Body of pancreas (tissue), 4 donors: ENCODE measurements at regions of chr2 and their contacts with region 1.

Region 1: DNA sequence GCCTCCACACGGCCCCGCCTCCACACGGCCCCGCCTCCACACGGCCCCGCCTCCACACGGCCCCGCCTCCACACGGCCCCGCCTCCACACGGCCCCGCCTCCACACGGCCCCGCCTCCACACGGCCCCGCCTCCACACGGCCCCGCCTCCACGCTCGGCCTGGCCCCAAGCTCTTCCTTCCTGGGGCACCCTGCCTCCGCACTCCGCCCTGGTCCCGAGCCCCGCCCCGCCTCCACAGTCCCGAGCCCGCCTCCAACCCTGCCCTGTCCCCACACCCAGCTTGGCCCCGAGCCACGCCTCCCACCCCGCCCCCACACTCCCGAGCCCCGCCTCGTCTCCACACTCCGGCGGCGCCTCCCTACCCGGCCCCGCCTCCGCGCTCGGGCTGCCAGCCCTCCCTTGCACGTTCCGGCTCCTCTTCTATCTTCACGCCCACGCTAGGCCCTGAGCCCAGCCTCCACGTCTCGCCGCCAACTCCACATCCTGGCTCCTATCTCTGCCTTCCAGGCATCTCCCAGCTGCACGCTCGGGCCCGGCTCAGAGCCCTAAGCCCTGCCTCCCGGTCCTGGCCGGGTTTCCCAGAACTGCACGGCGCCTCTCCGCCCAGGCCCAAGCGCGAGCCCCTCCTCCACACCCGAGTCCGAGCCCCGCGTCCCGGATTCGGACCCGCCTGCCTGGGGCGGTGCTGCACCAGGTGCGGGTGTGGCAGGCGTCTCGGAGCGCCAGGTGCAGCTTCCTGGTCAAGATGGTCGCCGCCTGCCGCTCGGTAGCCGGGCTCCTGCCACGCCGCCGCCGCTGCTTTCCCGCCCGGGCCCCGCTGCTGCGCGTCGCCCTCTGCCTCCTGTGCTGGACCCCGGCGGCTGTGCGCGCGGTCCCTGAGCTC is at the start of gene TMEM87B:
- DNase-seq: peak; percentile 98 to 99 (median 98)
- ATAC-seq: peak; percentile 80
- H3K4me3 ChIP-seq: peak within 1 kb of the TSS; percentile 71 to 90
- H3K27ac ChIP-seq: peak within 1 kb of the TSS; percentile 86 to 97 (median 89)
- H3K4me1 ChIP-seq: peaks cover 32% of the 10 kb centered on the region
- H3K27me3 ChIP-seq: no peaks in the 10 kb centered on the region
- CTCF ChIP-seq: no peak
- POLR2A ChIP-seq: peak; percentile 69 to 90 (median 88)
- total RNA-seq, gene TMEM87B: 14.8 to 15.3 TPM

Region 2: GRCh38 chr2:111932841-111933291 is 122.2 kb before region 1 on chr2:
- intact Hi-C with region 1: no loop called
- DNase-seq: no peak
- ATAC-seq: no peak
- H3K4me3 ChIP-seq: no peak overlapping the region
- H3K27ac ChIP-seq: no peak overlapping the region
- H3K4me1 ChIP-seq: peaks cover 10% of the 10 kb centered on the region
- H3K27me3 ChIP-seq: no peaks in the 10 kb centered on the region
- CTCF ChIP-seq: no peak
- POLR2A ChIP-seq: no peak

Region 3: GRCh38 chr2:111946294-111947114 is 108.6 kb before region 1 on chr2:
- intact Hi-C with region 1: loop called (anchors 5 kb)
- DNase-seq: peak; percentile 72 to 93 (median 84)
- ATAC-seq: peak; percentile 98
- H3K4me3 ChIP-seq: no peak overlapping the region
- H3K27ac ChIP-seq: peak overlapping the region; percentile 79 to 88 (median 82)
- H3K4me1 ChIP-seq: peaks cover 34% of the 10 kb centered on the region
- H3K27me3 ChIP-seq: no peaks in the 10 kb centered on the region
- CTCF ChIP-seq: peak in 1 of 7 experiments; percentile 15
- POLR2A ChIP-seq: peak in 1 of 3 donors; percentile 11

Region 4: GRCh38 chr2:112305132-112305531 is 250.0 kb after region 1 on chr2:
- intact Hi-C with region 1: no loop called
- DNase-seq: no peak
- ATAC-seq: no peak
- H3K4me3 ChIP-seq: no peak overlapping the region
- H3K27ac ChIP-seq: no peak overlapping the region
- H3K4me1 ChIP-seq: peaks cover 18% of the 10 kb centered on the region
- H3K27me3 ChIP-seq: no peaks in the 10 kb centered on the region
- CTCF ChIP-seq: no peak
- POLR2A ChIP-seq: no peak